ENCODE measurements at regions of chr5 and their contacts with region 1.

Region 1: GRCh38 chr5:154189819-154190594 is 526 bp upstream of the GALNT10 start:
- DNase-seq: peak; percentile 88
- ATAC-seq: peak; percentile 85 to 94 (median 92)
- H3K4me3 ChIP-seq: peak overlapping the region; percentile 71 to 100 (median 95)
- H3K27ac ChIP-seq: peak overlapping the region; percentile 83 to 92 (median 90)
- H3K4me1 ChIP-seq: peaks cover 0 to 47% (median 38%) of the 10 kb centered on the region in 9 donors
- H3K27me3 ChIP-seq: peaks cover 0 to 12% (median 0%) of the 10 kb centered on the region in 7 donors
- CTCF ChIP-seq: peak in 7 of 9 donors; percentile 7 to 58 (median 53)

Region 2: DNA sequence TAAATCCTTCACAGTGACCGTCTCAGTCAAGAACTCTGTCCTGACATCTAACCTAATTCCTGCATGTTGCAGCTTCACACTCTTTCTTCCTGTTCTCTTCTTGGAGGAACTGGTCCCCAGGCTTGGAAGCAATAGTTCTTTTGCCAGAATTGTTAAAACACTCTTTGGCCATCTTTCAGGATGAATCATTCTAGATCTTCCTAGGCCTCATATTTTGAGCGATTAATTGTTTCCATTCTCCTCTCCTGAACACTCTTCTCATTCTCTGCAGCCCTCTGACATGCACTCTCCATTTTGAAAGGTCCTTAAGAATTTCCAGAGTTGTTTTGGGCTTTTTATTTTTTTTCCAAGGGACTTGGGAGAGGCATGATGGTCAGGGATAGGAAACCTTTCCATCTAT is 237.1 kb before region 1 on chr5:
- intact Hi-C with region 1: no loop called
- DNase-seq: no peak
- ATAC-seq: peak in 5 of 8 donors; percentile 27 to 62 (median 46)
- H3K4me3 ChIP-seq: no peak overlapping the region
- H3K27ac ChIP-seq: peak overlapping the region in 2 of 10 donors; percentile 9 to 30
- H3K4me1 ChIP-seq: no peaks in the 10 kb centered on the region
- H3K27me3 ChIP-seq: no peaks in the 10 kb centered on the region
- CTCF ChIP-seq: no peak

Region 3: GRCh38 chr5:153981905-153982605 is 208.0 kb before region 1 on chr5:
- intact Hi-C with region 1: loop called in 1 of 10 experiments (anchors 10 kb)
- DNase-seq: no peak
- ATAC-seq: no peak
- H3K4me3 ChIP-seq: no peak overlapping the region
- H3K27ac ChIP-seq: no peak overlapping the region
- H3K4me1 ChIP-seq: peaks cover 0 to 4% (median 0%) of the 10 kb centered on the region in 9 donors
- H3K27me3 ChIP-seq: no peaks in the 10 kb centered on the region
- CTCF ChIP-seq: no peak

Region 4: DNA sequence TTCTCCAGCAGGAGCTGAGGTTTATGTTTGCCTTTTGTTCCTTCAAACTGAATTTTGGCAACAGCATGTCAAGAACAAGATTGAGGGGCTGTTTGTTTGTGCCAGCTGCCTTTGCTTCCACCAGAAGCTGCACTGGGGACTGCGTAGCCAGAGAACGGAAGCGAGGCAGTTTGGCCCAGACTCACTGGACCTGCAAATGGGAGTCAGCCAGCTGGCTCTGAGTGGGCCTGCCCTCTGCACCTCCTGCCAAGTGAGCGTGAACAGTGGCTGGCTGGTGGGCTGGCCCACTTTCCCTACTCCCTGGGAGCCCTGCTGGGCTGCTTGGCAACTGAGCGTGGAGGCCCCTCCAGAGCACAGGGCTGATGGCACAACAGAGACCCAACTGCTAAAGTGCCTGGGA is 112.2 kb after region 1 on chr5:
- intact Hi-C with region 1: loop called in 1 of 10 experiments (anchors 10 kb)
- DNase-seq: peak; percentile 69 to 74
- ATAC-seq: peak; percentile 86 to 99 (median 95)
- H3K4me3 ChIP-seq: no peak overlapping the region
- H3K27ac ChIP-seq: peak overlapping the region in 8 of 10 donors; percentile 7 to 71 (median 33)
- H3K4me1 ChIP-seq: peaks cover 0 to 30% (median 23%) of the 10 kb centered on the region in 9 donors
- H3K27me3 ChIP-seq: no peaks in the 10 kb centered on the region
- CTCF ChIP-seq: no peak

Region 5: GRCh38 chr5:154395407-154396258 is 205.6 kb after region 1 on chr5:
- intact Hi-C with region 1: loop called in 3 of 10 experiments (anchors 5 kb)
- DNase-seq: no peak
- ATAC-seq: peak in 1 of 8 donors; percentile 43
- H3K4me3 ChIP-seq: no peak overlapping the region
- H3K27ac ChIP-seq: no peak overlapping the region
- H3K4me1 ChIP-seq: peaks cover 0 to 8% (median 0%) of the 10 kb centered on the region in 9 donors
- H3K27me3 ChIP-seq: no peaks in the 10 kb centered on the region
- CTCF ChIP-seq: no peak

Measured in heart right ventricle (tissue), 16 donors.